CD8-positive, alpha-beta T cell (primary cell): ENCODE measurements at regions of chr6 and their contacts with region 1.

Region 1: GRCh38 chr6:155327326-155328073 is 13.2 kb upstream of the TFB1M start:
- DNase-seq: peak in 8 of 9 experiments; percentile 37 to 76 (median 64)
- ATAC-seq: peak; percentile 58
- H3K4me3 ChIP-seq: no peak overlapping the region
- H3K4me3 Mint-ChIP-seq: no peak overlapping the region
- H3K27ac ChIP-seq: no peak overlapping the region
- H3K27ac Mint-ChIP-seq: peak overlapping the region; percentile 3
- H3K4me1 ChIP-seq: peaks cover 10% of the 10 kb centered on the region
- H3K4me1 Mint-ChIP-seq: peaks cover 11% of the 10 kb centered on the region
- H3K27me3 ChIP-seq: no peaks in the 10 kb centered on the region
- H3K27me3 Mint-ChIP-seq: no peaks in the 10 kb centered on the region
- CTCF ChIP-seq: peak; percentile 89

Region 2: GRCh38 chr6:155314092-155314772 is 13.3 kb before region 1 on chr6 and contains the start of gene TFB1M:
- CTCF ChIA-PET with region 1: interaction called, 13 read pairs
- POLR2A ChIA-PET with region 1: no interaction called
- intact Hi-C with region 1: no loop called
- DNase-seq: peak; percentile 91 to 99 (median 97)
- ATAC-seq: peak; percentile 93
- H3K4me3 ChIP-seq: peak within 1 kb of the TSS; percentile 92 to 97
- H3K4me3 Mint-ChIP-seq: peak within 1 kb of the TSS; percentile 98
- H3K27ac ChIP-seq: peak within 1 kb of the TSS; percentile 83 to 87
- H3K27ac Mint-ChIP-seq: peak within 1 kb of the TSS; percentile 97
- H3K4me1 ChIP-seq: peaks cover 7% of the 10 kb centered on the region
- H3K4me1 Mint-ChIP-seq: peaks cover 35% of the 10 kb centered on the region
- H3K27me3 ChIP-seq: no peaks in the 10 kb centered on the region
- H3K27me3 Mint-ChIP-seq: no peaks in the 10 kb centered on the region
- CTCF ChIP-seq: no peak
- total RNA-seq, gene TFB1M: 6.3 to 7.9 TPM

Region 3: GRCh38 chr6:155530219-155530834 is 202.8 kb after region 1 on chr6:
- CTCF ChIA-PET with region 1: interaction called, 3 read pairs
- POLR2A ChIA-PET with region 1: no interaction called
- intact Hi-C with region 1: loop called (anchors 1 kb)
- DNase-seq: peak in 2 of 9 experiments; percentile 18 to 45
- ATAC-seq: no peak
- H3K4me3 ChIP-seq: no peak overlapping the region
- H3K4me3 Mint-ChIP-seq: no peak overlapping the region
- H3K27ac ChIP-seq: no peak overlapping the region
- H3K27ac Mint-ChIP-seq: no peak overlapping the region
- H3K4me1 ChIP-seq: no peaks in the 10 kb centered on the region
- H3K4me1 Mint-ChIP-seq: peaks cover 4% of the 10 kb centered on the region
- H3K27me3 ChIP-seq: no peaks in the 10 kb centered on the region
- H3K27me3 Mint-ChIP-seq: no peaks in the 10 kb centered on the region
- CTCF ChIP-seq: peak; percentile 45

Region 4: DNA sequence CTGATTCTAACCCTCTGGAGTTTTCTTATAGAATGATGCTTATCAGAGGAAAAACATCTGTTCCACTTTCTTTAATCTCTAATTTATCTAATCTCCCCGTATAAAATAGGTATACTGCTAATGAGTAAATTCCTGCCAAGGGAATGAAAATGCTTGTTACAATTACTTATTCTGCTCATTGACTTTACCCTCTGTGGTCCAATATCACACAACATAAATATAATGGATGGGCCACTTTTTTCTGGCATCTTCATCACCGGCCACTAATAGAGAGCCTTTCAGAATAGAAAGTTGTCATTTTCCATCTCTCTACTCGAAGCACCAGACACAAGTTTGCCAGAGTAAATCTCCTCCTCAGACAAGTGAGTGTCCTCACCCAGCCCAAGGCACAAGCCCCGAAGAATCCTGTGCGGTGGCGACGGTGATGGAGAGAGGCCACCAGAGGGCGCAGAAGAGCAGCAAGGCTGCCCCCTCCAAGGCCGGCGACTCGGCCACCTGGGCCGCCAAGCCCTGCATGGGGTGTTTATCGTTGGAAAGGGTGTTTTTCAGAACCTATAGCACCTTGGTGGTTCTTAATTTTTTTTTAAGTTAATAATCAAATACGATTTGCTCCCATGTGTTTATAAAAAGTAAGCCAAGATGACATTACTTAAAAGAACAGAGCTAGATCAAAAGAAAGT is 1236.8 kb after region 1 on chr6:
- CTCF ChIA-PET with region 1: interaction called, 6 read pairs
- POLR2A ChIA-PET with region 1: no interaction called
- intact Hi-C with region 1: loop called (anchors 2 to 5 kb)
- DNase-seq: peak; percentile 59 to 88 (median 73)
- ATAC-seq: peak; percentile 93
- H3K4me3 ChIP-seq: no peak overlapping the region
- H3K4me3 Mint-ChIP-seq: no peak overlapping the region
- H3K27ac ChIP-seq: no peak overlapping the region
- H3K27ac Mint-ChIP-seq: no peak overlapping the region
- H3K4me1 ChIP-seq: no peaks in the 10 kb centered on the region
- H3K4me1 Mint-ChIP-seq: no peaks in the 10 kb centered on the region
- H3K27me3 ChIP-seq: peaks cover 0 to 3% of the 10 kb centered on the region in 2 experiments
- H3K27me3 Mint-ChIP-seq: peaks cover 6% of the 10 kb centered on the region
- CTCF ChIP-seq: peak; percentile 89

Region 5: DNA sequence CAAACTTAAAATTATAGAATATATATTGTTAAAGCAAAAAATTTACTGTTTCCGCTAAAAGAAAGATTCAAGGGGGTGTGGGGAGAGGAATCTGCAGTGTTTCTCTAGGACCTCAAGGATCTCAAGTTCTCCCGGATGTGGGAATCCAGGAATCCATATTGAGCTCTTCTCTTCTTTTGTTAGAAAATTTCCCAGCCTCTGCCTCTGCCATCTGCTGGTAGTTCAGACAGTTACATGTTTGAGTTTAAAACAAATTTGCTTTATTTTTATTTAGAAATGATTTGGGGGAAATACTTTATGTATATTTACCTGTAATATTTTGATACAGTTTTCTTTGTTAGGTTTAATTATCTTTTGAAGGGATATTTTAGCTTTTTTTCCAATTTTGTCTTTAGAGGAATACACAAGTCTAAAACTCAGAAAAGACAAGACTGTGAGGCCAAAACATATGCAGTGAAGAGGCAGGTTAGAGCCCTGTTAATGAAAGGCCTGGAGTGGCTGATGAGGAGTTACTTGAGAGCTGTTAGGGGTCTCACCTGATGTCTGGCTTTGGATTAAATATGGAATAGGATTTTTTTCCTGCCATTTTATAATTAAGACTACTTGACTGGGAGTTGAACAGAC is 1718.4 kb after region 1 on chr6:
- CTCF ChIA-PET with region 1: no interaction called
- POLR2A ChIA-PET with region 1: no interaction called
- intact Hi-C with region 1: loop called in 1 of 2 experiments (anchors 2 kb)
- DNase-seq: peak in 1 of 9 experiments; percentile 29
- ATAC-seq: no peak
- H3K4me3 ChIP-seq: no peak overlapping the region
- H3K4me3 Mint-ChIP-seq: no peak overlapping the region
- H3K27ac ChIP-seq: no peak overlapping the region
- H3K27ac Mint-ChIP-seq: no peak overlapping the region
- H3K4me1 ChIP-seq: no peaks in the 10 kb centered on the region
- H3K4me1 Mint-ChIP-seq: peaks cover 22% of the 10 kb centered on the region
- H3K27me3 ChIP-seq: no peaks in the 10 kb centered on the region
- H3K27me3 Mint-ChIP-seq: no peaks in the 10 kb centered on the region
- CTCF ChIP-seq: peak; percentile 58